SK-N-SH (cell line): ENCODE measurements at regions of chr12 and their contacts with region 1.

Region 1: DNA sequence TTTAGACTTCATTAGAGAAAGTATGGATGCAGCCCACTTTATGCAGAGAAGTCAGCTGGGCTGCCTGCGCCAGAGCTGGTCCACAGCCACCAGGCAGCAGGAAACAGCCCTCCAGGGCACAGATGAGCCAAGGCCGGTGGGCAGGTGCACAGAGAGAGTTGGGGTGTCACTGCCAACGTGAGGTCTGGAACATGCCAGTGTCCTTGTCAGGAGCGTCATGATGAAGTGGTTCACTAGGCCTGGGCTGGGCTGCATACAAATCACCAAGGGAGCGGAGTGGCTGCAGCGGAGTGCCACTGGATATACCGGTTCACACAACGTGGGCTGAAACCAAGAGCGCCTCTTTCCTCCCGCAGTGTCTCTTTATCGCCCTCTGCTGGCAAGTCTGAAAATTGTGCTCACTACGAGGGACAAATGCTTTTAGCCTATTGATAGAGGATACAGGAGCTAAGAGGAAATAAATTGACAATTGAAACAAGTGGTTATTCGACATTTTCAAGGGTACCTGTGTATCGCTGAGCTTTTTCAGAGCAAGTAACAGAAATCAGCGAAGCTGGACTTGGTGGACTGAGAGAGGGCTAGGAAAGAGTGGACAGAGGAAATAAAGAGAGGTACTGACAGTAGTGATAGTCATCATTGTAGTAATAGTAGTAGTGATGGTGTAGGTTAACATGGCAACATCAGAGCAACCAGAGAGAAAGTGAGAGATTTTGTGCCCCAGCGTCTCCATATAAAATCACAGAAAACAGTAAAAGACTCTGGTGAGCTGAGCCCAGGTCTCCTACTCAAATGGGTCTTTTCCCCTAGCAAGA is 52.0 kb upstream of the ITPR2 start:
- DNase-seq: peak; percentile 73
- H3K4me3 ChIP-seq: no peak overlapping the region; a peak in 1 of 4 replicates
- H3K27ac ChIP-seq: peak overlapping the region in 1 of 2 experiments; percentile 60; a peak in 1 of 4 replicates
- H3K4me1 ChIP-seq: peaks cover 0 to 4% of the 10 kb centered on the region in 2 experiments; a peak in 1 of 4 replicates
- H3K27me3 ChIP-seq: no peaks in the 10 kb centered on the region
- CTCF ChIP-seq: peak; percentile 94
- EP300 ChIP-seq: no peak
- RAD21 ChIP-seq: peak; percentile 95

Region 2: GRCh38 chr12:26555139-26555538 is 329.8 kb before region 1 on chr12:
- CTCF ChIA-PET with region 1: no interaction called
- POLR2A ChIA-PET with region 1: no interaction called
- DNase-seq: no peak
- H3K4me3 ChIP-seq: no peak overlapping the region
- H3K27ac ChIP-seq: no peak overlapping the region
- H3K4me1 ChIP-seq: no peaks in the 10 kb centered on the region
- H3K27me3 ChIP-seq: no peaks in the 10 kb centered on the region
- CTCF ChIP-seq: no peak
- EP300 ChIP-seq: no peak
- RAD21 ChIP-seq: no peak

Region 3: GRCh38 chr12:26791301-26791791 is 93.6 kb before region 1 on chr12:
- CTCF ChIA-PET with region 1: interaction called, 10 read pairs
- POLR2A ChIA-PET with region 1: no interaction called
- DNase-seq: no peak
- H3K4me3 ChIP-seq: no peak overlapping the region
- H3K27ac ChIP-seq: peak overlapping the region; percentile 39 to 55; a peak in 3 of 4 replicates
- H3K4me1 ChIP-seq: peaks cover 14 to 27% of the 10 kb centered on the region in 2 experiments
- H3K27me3 ChIP-seq: no peaks in the 10 kb centered on the region
- CTCF ChIP-seq: no peak
- EP300 ChIP-seq: no peak
- RAD21 ChIP-seq: no peak

Region 4: DNA sequence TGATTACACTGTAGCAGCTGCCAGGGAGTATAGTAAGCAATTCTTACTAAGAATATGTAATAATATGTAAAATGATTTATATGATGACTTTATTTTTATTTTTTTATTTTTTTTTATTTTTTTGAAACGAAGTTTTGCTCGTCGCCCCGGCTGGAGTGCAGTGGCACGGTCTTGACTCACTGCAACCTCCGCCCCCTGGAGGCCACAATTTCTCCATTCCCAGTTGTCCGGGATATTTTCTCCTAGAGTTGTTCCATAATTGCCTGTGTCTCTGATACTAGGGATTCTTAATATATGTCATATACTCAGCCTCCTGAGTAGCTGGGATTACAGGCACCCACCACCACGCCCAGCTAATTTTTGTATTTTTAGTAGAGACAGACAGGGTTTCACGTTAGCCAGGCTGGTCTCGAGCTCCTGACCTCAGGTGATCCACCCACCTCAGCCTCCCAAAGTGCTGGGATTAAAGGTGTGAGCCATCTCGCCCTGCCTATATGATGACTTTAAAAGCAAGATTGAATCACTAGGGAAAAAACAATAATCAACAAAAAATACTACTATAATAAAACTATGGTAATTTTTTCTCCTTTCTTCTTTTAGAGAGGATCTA is 39.8 kb before region 1 on chr12:
- CTCF ChIA-PET with region 1: interaction called, 70 read pairs
- POLR2A ChIA-PET with region 1: no interaction called
- DNase-seq: peak; percentile 50
- H3K4me3 ChIP-seq: no peak overlapping the region; a peak in 1 of 4 replicates
- H3K27ac ChIP-seq: peak overlapping the region in 1 of 2 experiments; percentile 91; a peak in 1 of 4 replicates
- H3K4me1 ChIP-seq: peaks cover 0 to 7% of the 10 kb centered on the region in 2 experiments; a peak in 2 of 4 replicates
- H3K27me3 ChIP-seq: no peaks in the 10 kb centered on the region
- CTCF ChIP-seq: peak; percentile 58
- EP300 ChIP-seq: no peak
- RAD21 ChIP-seq: peak; percentile 55

Region 5: DNA sequence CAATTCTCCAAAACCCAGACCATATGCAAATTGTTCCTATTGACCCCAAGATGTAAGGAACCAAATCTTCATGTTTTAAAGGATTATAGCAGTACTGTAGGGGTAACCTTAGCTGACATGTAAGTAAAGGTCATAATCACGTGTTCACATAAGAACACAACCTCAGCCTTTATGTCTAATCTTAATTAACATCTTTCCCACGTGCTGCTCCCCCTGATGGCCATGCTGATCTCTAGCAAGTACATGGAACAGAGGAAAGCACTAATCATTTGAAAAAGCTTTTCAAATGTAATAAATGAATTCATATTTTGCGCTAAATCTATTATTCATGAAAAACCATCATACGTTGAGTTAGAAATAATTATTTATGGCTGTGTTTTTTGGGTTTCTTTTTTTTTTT is 21.5 kb before region 1 on chr12:
- CTCF ChIA-PET with region 1: interaction called, 41 read pairs
- POLR2A ChIA-PET with region 1: no interaction called
- DNase-seq: no peak
- H3K4me3 ChIP-seq: no peak overlapping the region; a peak in 1 of 4 replicates
- H3K27ac ChIP-seq: no peak overlapping the region
- H3K4me1 ChIP-seq: peaks cover 0 to 2% of the 10 kb centered on the region in 2 experiments; a peak in 1 of 4 replicates
- H3K27me3 ChIP-seq: no peaks in the 10 kb centered on the region
- CTCF ChIP-seq: peak; percentile 38
- EP300 ChIP-seq: no peak
- RAD21 ChIP-seq: no peak

Region 6: DNA sequence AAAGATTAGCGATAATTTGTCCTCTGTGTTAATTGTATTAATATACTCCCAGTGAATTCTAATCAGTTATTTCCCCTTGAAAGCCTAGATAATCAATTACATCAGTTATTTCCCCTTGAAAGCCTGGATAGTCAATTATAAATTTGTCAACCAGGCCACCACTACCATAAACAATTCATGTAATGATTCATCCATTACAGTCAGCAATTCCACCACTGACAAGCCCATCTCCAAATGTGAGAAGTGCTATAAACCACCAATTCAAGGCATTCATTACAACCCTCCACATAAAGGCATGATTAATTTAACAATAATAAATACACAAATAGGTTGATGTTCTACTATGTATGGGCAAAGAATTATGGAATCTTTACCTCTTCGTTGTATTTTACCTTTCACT is 11.9 kb after region 1 on chr12:
- CTCF ChIA-PET with region 1: interaction called, 31 read pairs
- POLR2A ChIA-PET with region 1: no interaction called
- DNase-seq: no peak
- H3K4me3 ChIP-seq: no peak overlapping the region
- H3K27ac ChIP-seq: no peak overlapping the region
- H3K4me1 ChIP-seq: no peaks in the 10 kb centered on the region
- H3K27me3 ChIP-seq: no peaks in the 10 kb centered on the region
- CTCF ChIP-seq: no peak
- EP300 ChIP-seq: no peak
- RAD21 ChIP-seq: no peak

Region 7: GRCh38 chr12:27014085-27014858 is 129.3 kb after region 1 on chr12 and contains the start of gene TM7SF3:
- CTCF ChIA-PET with region 1: interaction called, 12 read pairs
- POLR2A ChIA-PET with region 1: no interaction called
- DNase-seq: peak; percentile 96
- H3K4me3 ChIP-seq: peak within 1 kb of the TSS; percentile 84 to 99
- H3K27ac ChIP-seq: peak within 1 kb of the TSS; percentile 66 to 92
- H3K4me1 ChIP-seq: peaks cover 0 to 19% of the 10 kb centered on the region in 2 experiments; a peak in 3 of 4 replicates
- H3K27me3 ChIP-seq: no peaks in the 10 kb centered on the region
- CTCF ChIP-seq: peak; percentile 88
- EP300 ChIP-seq: no peak
- RAD21 ChIP-seq: peak; percentile 89
- polyA plus RNA-seq, gene TM7SF3: 72.1 and 121 TPM in 2 replicates